Cardiac septum (tissue), 1 donor: ENCODE measurements at regions of chr15 and their contacts with region 1.

Region 1: DNA sequence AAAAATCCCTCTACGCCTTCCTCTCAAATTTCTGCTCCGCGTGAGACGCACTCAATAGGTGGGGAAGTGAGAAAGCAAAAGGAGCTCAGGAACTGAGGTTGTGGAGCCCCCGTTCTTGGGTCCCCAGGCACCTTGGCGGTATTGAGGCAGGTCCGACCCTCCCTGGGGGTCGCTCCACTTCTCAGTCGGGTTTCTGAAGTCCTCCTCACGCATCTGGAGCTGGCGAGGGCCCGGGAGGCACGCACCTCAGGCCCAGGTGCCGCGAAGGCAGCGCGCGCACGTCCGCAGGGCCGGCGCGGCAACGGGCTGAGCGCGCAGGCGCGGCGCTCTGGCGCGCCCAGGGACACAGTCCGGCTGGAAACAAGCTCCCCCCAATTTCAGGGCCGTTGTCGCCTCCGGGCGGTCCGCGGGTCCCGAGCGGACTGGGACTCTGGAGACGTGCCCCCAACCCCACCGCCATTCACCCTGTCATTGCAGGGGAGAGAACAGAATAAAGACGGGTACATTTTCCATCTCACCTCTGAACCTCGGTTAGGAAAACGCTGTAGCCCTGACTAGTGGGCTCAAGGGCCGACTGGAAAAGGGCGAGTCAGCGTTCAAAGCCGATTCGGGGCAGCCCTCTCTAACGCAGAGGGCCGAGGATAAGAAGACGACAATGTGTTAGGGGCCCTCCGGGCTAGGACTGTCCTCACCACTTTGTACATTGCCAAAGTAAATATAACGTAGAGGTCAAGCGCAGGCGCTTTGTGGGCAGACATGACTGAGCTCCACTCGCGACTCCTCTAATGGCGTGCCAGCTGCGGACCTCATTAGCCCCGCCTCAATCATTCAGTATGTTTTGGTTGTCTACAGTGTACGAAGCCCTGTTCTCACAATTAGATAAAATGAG is at the start of gene ZNF770:
- DNase-seq: peak; percentile 91
- total RNA-seq, gene ZNF770: 31.6 TPM

Region 2: GRCh38 chr15:34223904-34224596 is 764.2 kb before region 1 on chr15:
- intact Hi-C with region 1: loop called (anchors 10 kb)
- DNase-seq: no peak

Region 3: GRCh38 chr15:34969340-34970097 is 18.7 kb before region 1 on chr15 and contains the start of gene AQR:
- intact Hi-C with region 1: loop called (anchors 1 kb)
- DNase-seq: peak; percentile 98
- total RNA-seq, gene AQR: 13.2 TPM